ENCODE measurements at regions of chr6 and their contacts with region 1.

Region 1: DNA sequence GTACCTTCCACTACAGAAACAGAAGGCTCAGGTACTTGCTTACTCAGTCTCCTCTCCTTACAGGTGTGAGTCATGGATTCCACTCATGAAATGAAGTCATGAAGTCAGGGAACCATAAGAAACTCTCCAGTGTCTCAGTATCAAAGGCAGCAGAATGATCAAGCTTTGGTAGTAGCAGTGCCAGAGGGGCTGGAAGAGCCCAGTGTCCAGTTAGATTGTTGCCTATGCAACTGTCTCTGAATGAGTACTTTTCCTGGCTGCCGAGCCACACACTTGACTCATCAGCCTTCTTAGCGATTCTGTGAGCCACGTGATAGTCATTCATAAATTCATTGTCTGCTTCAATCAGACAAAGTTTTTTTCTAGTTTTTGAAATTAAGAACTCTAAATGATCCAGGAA is 52.2 kb upstream of the DTNBP1 start:
- DNase-seq: no peak
- ATAC-seq: peak; percentile 29 to 52
- H3K4me3 ChIP-seq: no peak overlapping the region
- H3K27ac ChIP-seq: no peak overlapping the region
- H3K4me1 ChIP-seq: no peaks in the 10 kb centered on the region
- H3K27me3 ChIP-seq: no peaks in the 10 kb centered on the region

Region 2: DNA sequence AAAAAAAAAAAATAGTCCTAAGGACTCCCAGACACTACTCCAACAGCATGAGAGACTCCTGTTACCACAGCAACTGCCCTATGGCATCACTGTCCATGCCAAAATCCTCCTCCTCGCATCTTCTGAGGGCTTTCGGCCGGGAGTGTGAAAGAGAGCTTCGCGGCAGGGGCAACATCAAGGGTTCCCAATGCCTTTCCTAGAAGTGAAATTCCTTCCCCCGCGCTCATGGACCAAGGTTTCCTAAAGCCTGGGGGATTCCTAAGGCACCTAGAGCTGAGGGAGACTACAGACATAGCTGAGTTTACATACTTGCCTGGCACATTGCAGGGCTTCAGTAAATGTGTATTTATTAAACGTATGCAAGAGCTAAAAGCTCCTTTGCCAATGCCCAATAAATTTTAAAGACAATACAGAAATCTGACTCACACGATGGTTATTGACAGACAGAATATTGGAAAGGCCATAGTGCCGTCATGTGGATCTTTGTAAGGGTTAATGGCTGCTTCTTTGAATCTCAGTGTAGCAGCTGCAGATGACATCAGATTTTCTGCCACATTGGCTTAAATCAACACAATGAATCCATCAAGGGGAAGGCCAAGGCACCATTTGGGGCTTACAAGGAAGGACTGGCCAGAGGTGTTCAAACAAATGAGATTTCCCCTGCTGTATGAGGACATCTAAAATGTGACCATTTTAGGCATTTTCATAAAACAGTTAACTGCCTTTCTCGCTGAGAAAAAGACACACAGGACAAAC is 750.4 kb before region 1 on chr6:
- intact Hi-C with region 1: no loop called
- DNase-seq: no peak
- ATAC-seq: no peak
- H3K4me3 ChIP-seq: no peak overlapping the region
- H3K27ac ChIP-seq: no peak overlapping the region
- H3K4me1 ChIP-seq: no peaks in the 10 kb centered on the region
- H3K27me3 ChIP-seq: no peaks in the 10 kb centered on the region

Region 3: GRCh38 chr6:15621203-15622044 is 93.6 kb before region 1 on chr6:
- intact Hi-C with region 1: no loop called
- DNase-seq: peak; percentile 41 to 81 (median 76)
- ATAC-seq: peak; percentile 85 to 93
- H3K4me3 ChIP-seq: no peak overlapping the region
- H3K27ac ChIP-seq: peak overlapping the region; percentile 97
- H3K4me1 ChIP-seq: peaks cover 2% of the 10 kb centered on the region
- H3K27me3 ChIP-seq: no peaks in the 10 kb centered on the region

Region 4: GRCh38 chr6:15987569-15987968 is 272.5 kb after region 1 on chr6:
- intact Hi-C with region 1: loop called in 1 of 4 experiments (anchors 10 kb)
- DNase-seq: no peak
- ATAC-seq: no peak
- H3K4me3 ChIP-seq: no peak overlapping the region
- H3K27ac ChIP-seq: no peak overlapping the region
- H3K4me1 ChIP-seq: no peaks in the 10 kb centered on the region
- H3K27me3 ChIP-seq: no peaks in the 10 kb centered on the region

Measured in right cardiac atrium (tissue), 5 donors.